ENCODE measurements at regions of chr5 and their contacts with region 1.

Region 1: DNA sequence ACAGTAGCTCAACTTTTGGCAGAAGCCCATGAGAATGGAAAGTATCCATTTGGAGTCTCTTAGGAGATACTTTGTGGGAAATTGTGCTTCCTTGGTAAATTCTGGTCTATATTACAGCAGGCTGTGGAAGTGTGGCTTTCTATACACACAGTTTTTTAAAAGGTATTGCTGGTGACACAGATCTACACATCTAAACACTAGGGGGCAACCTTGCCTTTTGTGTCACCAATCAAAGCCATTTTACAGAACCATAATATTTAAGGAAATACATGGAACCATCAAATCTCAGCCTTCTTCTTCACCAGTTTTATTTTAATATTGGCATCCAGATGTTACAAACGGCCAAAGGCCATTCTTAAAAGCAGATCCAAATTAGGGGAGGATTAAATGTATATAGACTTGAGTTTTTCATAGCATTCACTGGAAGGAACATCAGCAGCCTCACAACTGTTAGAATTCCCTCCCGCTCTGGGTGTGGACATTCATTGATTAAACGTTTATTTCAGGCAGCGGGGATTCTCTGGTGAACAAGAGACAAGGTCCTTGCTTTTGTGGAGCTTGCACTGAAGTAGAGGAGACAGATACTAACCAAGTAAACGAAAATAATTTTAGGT is 132.4 kb upstream of the EPB41L4A start:
- DNase-seq: peak; percentile 53
- H3K4me3 ChIP-seq: no peak overlapping the region
- H3K27ac ChIP-seq: no peak overlapping the region
- H3K4me1 ChIP-seq: no peaks in the 10 kb centered on the region
- H3K27me3 ChIP-seq: no peaks in the 10 kb centered on the region
- CTCF ChIP-seq: peak; percentile 60

Region 2: GRCh38 chr5:112097768-112098167 is 453.8 kb before region 1 on chr5:
- intact Hi-C with region 1: no loop called
- DNase-seq: no peak
- H3K4me3 ChIP-seq: no peak overlapping the region
- H3K27ac ChIP-seq: no peak overlapping the region
- H3K4me1 ChIP-seq: no peaks in the 10 kb centered on the region
- H3K27me3 ChIP-seq: no peaks in the 10 kb centered on the region
- CTCF ChIP-seq: no peak

Region 3: GRCh38 chr5:112492291-112492690 is 59.2 kb before region 1 on chr5:
- intact Hi-C with region 1: no loop called
- DNase-seq: no peak
- H3K4me3 ChIP-seq: no peak overlapping the region
- H3K27ac ChIP-seq: no peak overlapping the region
- H3K4me1 ChIP-seq: no peaks in the 10 kb centered on the region
- H3K27me3 ChIP-seq: no peaks in the 10 kb centered on the region
- CTCF ChIP-seq: peak; percentile 50

Region 4: DNA sequence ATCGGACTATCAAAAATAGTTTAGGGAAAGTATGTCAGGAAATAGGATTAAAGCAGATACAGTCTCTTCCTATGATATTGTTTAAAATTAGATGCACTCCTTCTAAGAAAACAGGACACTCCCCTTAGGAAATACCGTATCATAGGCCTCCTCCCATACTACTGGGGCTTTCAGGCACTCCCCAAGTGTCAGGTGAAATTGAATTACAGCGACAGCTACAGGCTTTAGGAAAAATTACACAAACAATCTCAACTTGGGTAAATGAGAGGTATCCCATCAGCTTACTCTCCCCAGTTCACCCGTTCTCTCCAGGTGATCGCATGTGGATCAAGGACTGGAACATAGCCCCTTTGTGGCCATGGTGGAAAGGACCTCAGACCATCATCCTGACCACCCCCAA is 22.0 kb before region 1 on chr5:
- intact Hi-C with region 1: no loop called
- DNase-seq: no peak
- H3K4me3 ChIP-seq: no peak overlapping the region
- H3K27ac ChIP-seq: no peak overlapping the region
- H3K4me1 ChIP-seq: no peaks in the 10 kb centered on the region
- H3K27me3 ChIP-seq: no peaks in the 10 kb centered on the region
- CTCF ChIP-seq: no peak

Region 5: DNA sequence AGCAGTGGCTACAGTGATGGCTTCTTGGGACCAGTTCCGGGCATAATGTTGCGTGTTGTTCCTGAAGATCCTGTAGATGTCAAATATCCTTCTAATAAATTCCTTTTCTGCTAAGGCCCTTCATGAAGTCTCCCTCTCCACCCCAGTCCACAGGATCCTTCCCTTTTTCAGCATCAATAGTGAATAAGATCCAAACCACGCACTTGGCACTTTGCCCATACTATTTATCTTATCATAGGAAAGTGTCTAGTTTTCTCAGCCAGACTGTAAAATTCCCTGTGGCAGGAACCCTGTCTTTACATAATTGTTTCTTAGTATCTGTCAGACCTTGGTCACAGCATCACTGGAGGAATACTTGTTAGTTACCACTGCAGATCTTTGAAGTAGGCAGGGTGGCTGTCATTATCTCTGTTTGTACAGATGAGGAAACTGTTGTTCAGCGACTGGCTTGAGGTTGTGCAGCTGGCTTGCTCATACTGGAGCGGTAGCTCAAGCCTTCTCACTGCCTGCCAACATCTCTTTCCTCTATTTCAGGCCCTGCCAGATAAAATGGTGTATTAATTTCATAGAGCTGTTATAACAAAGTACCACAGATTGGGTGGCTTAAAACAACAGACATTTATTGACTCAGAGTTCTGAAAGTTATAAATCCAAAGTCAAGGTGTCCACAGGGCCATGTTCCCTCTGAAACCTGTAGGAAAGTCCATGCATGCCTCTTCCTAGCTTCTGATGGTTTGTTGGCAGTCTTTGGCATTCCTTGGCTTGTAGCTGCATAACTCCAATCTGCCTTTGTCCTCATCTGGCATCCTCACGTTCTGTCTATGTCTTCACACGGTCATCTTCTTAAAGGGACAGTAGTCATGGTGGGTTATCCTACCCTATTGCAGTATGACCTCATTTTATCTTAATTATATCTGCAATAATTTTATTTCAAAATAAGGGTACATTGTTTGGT is 152.6 kb after region 1 on chr5:
- intact Hi-C with region 1: no loop called
- DNase-seq: no peak
- H3K4me3 ChIP-seq: no peak overlapping the region
- H3K27ac ChIP-seq: no peak overlapping the region
- H3K4me1 ChIP-seq: peaks cover 7% of the 10 kb centered on the region
- H3K27me3 ChIP-seq: no peaks in the 10 kb centered on the region
- CTCF ChIP-seq: no peak

Region 6: DNA sequence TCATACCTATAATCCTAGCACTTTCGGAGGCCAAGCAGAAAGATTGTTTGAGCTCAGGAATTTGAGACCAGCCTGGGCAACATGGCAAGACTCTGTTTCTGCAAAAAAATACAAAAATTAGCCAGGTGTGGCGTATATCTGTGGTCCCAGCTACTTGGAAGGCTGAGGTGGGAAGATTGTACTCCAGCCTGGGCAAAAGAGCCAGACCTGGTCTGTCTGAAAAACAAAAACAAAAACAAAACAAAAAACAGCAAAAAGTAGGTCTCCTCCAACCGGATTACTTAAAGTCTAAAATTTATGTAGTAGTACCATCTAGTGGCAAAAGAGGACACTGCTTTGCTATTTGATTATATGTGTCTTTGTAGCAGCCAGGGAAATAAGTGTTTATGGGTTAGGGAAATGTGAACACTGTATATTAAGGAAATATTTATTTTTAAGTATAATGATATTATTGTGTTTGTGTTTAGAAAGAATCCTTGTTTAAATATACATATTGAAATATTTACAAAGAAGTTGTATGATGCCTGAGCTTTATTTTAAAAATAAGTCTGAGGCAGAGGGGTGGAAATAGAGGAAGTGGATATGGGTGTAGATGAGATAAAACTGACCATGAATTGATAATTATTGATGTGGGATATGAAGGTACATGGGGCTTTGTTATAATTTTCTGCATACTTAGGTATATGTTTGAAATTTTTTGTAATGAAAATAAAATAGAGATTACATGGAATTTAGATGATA is 206.1 kb after region 1 on chr5:
- intact Hi-C with region 1: loop called (anchors 2 kb)
- DNase-seq: no peak
- H3K4me3 ChIP-seq: no peak overlapping the region
- H3K27ac ChIP-seq: no peak overlapping the region
- H3K4me1 ChIP-seq: no peaks in the 10 kb centered on the region
- H3K27me3 ChIP-seq: no peaks in the 10 kb centered on the region
- CTCF ChIP-seq: peak; percentile 82

Region 7: GRCh38 chr5:112848116-112848811 is 296.7 kb after region 1 on chr5:
- intact Hi-C with region 1: loop called (anchors 5 kb)
- DNase-seq: no peak
- H3K4me3 ChIP-seq: no peak overlapping the region
- H3K27ac ChIP-seq: no peak overlapping the region
- H3K4me1 ChIP-seq: no peaks in the 10 kb centered on the region
- H3K27me3 ChIP-seq: no peaks in the 10 kb centered on the region
- CTCF ChIP-seq: peak; percentile 61

Region 8: GRCh38 chr5:112921833-112922817 is 370.6 kb after region 1 on chr5 and contains the start of gene REEP5:
- intact Hi-C with region 1: loop called (anchors 10 kb)
- DNase-seq: peak; percentile 81
- H3K4me3 ChIP-seq: peak within 1 kb of the TSS; percentile 99
- H3K27ac ChIP-seq: peak within 1 kb of the TSS; percentile 99
- H3K4me1 ChIP-seq: peaks cover 5% of the 10 kb centered on the region
- H3K27me3 ChIP-seq: no peaks in the 10 kb centered on the region
- CTCF ChIP-seq: peak; percentile 38
- total RNA-seq, gene REEP5: 76.7 to 96.3 TPM

Measured in colonic mucosa (tissue), 4 donors.